ENCODE measurements at regions of chr1 and their contacts with region 1.

Region 1: GRCh38 chr1:150876119-150876454 is 312 bp downstream of the ARNT start:
- DNase-seq: no peak
- ATAC-seq: peak; percentile 37
- H3K4me3 Mint-ChIP-seq: peak overlapping the region; percentile 88
- H3K27ac Mint-ChIP-seq: peak overlapping the region; percentile 95
- H3K4me1 Mint-ChIP-seq: peaks cover 25% of the 10 kb centered on the region
- H3K27me3 Mint-ChIP-seq: no peaks in the 10 kb centered on the region

Region 2: GRCh38 chr1:150486964-150487762 is 388.9 kb before region 1 on chr1 and contains the start of gene TARS2:
- CTCF ChIA-PET with region 1: no interaction called
- POLR2A ChIA-PET with region 1: no interaction called
- intact Hi-C with region 1: loop called in 1 of 2 experiments (anchors 1 kb)
- DNase-seq: peak; percentile 96
- ATAC-seq: peak; percentile 100
- H3K4me3 Mint-ChIP-seq: peak within 1 kb of the TSS; percentile 96
- H3K27ac Mint-ChIP-seq: peak within 1 kb of the TSS; percentile 99
- H3K4me1 Mint-ChIP-seq: peaks cover 13% of the 10 kb centered on the region
- H3K27me3 Mint-ChIP-seq: no peaks in the 10 kb centered on the region
- total RNA-seq, gene TARS2: 43.8 to 58.6 TPM

Region 3: GRCh38 chr1:150696590-150697524 is 179.2 kb before region 1 on chr1 and contains the start of gene GOLPH3L:
- CTCF ChIA-PET with region 1: no interaction called
- POLR2A ChIA-PET with region 1: interaction called, 3 read pairs
- intact Hi-C with region 1: loop called (anchors 1 kb)
- DNase-seq: peak; percentile 93
- ATAC-seq: peak; percentile 100
- H3K4me3 Mint-ChIP-seq: peak within 1 kb of the TSS; percentile 98
- H3K27ac Mint-ChIP-seq: peak within 1 kb of the TSS; percentile 92
- H3K4me1 Mint-ChIP-seq: peaks cover 21% of the 10 kb centered on the region
- H3K27me3 Mint-ChIP-seq: peaks cover 3% of the 10 kb centered on the region
- total RNA-seq, gene GOLPH3L: 24.2 to 29.1 TPM

Region 4: GRCh38 chr1:150765296-150765976 is 110.7 kb before region 1 on chr1 and contains the start of gene CTSS:
- CTCF ChIA-PET with region 1: no interaction called
- POLR2A ChIA-PET with region 1: no interaction called
- intact Hi-C with region 1: loop called in 1 of 2 experiments (anchors 1 kb)
- DNase-seq: no peak
- ATAC-seq: peak; percentile 94
- H3K4me3 Mint-ChIP-seq: peak within 1 kb of the TSS; percentile 80
- H3K27ac Mint-ChIP-seq: peak within 1 kb of the TSS; percentile 91
- H3K4me1 Mint-ChIP-seq: peaks cover 33% of the 10 kb centered on the region
- H3K27me3 Mint-ChIP-seq: no peaks in the 10 kb centered on the region
- total RNA-seq, gene CTSS: 31.4 to 44.8 TPM

Region 5: GRCh38 chr1:150841626-150842025 is 34.5 kb before region 1 on chr1:
- CTCF ChIA-PET with region 1: no interaction called
- POLR2A ChIA-PET with region 1: no interaction called
- intact Hi-C with region 1: loop called in 1 of 2 experiments (anchors 5 kb)
- DNase-seq: no peak
- ATAC-seq: peak; percentile 91
- H3K4me3 Mint-ChIP-seq: peak overlapping the region; percentile 2
- H3K27ac Mint-ChIP-seq: peak overlapping the region; percentile 21
- H3K4me1 Mint-ChIP-seq: peaks cover 33% of the 10 kb centered on the region
- H3K27me3 Mint-ChIP-seq: no peaks in the 10 kb centered on the region

Region 6: DNA sequence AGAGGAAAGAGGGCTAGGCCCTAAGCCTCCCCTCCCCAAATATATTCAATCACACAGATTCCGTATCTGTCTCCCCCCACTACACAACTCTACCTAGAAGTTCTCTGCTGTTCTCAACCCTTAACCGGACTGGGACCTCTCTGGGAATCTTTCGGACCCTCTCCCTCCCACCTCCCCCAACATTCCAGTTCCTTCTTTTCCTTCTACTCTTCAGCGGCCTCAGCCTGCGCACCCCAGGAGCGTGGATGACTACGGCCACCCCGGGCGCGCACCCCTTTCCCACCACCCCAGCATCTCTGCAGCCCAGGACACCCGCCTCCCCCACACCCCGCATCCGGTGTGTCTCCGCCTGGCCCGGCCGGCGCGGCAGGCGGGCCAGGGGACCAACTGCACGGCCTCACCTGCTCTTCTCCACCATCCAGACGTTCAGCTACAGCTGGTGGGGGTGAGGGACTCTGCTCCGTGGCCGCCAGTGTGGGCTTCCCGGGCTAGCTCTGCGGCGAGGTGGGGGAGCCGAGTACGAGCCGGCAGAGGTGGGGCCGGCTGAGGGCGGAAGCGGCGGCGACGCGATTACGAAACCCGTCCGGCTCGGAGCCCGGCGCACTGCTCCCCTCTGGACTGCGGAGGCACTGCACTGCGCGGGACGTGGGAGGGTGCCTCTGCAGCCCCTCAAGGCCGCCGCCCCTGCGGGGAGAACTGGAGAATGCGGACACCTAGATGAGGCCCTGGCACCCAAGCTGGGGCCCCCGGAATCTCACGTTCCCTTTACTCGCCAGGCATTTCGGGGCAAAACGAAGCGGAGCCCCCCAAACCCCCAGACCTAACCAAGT is 183.2 kb after region 1 on chr1 and contains the start of gene CDC42SE1:
- CTCF ChIA-PET with region 1: no interaction called
- POLR2A ChIA-PET with region 1: no interaction called
- intact Hi-C with region 1: loop called in 1 of 2 experiments (anchors 1 kb)
- DNase-seq: peak; percentile 92
- ATAC-seq: peak; percentile 75
- H3K4me3 Mint-ChIP-seq: peak within 1 kb of the TSS; percentile 93
- H3K27ac Mint-ChIP-seq: peak within 1 kb of the TSS; percentile 98
- H3K4me1 Mint-ChIP-seq: peaks cover 54% of the 10 kb centered on the region
- H3K27me3 Mint-ChIP-seq: no peaks in the 10 kb centered on the region
- total RNA-seq, gene CDC42SE1: 95.4 to 101 TPM

Measured in activated CD4-positive, alpha-beta T cell treated with anti-CD3 and anti-CD28 coated beads for 36 hours (primary cell).